IMR-90 (cell line): ENCODE measurements at regions of chr2 and their contacts with region 1.

Region 1: DNA sequence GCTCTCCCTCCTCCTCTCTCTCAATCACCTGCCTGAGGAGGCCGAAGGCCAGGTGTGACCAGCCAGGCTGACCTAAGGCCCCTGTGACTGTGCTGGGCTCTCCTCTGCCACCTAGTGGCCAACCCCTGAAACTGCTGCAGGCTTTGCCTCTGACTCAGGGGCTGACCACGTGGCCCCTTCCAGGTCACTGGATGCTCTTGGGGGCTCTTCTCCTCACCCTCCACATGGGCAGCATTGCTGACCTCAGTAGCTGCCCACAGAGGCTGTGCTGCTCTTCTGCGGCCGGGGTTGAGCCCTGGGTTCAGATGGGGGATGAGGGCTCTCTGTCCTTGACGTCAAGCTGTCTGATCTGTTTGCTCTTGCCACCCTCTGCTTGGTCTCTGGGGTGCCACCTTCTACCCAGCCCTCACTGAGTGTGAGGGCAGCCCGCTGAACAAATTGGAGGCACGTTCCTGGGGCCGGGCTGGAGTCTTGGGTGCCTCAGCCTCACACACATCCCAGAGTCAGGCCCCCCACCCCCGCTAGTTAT is 122.7 kb downstream of the TWIST2 start:
- DNase-seq: peak; percentile 63
- ATAC-seq: peak; percentile 90
- H3K4me3 ChIP-seq: no peak overlapping the region
- H3K27ac ChIP-seq: no peak overlapping the region
- H3K4me1 ChIP-seq: peaks cover 10% of the 10 kb centered on the region
- H3K27me3 ChIP-seq: no peaks in the 10 kb centered on the region; the same call in 1 of the 2 replicates
- CTCF ChIP-seq: peak; percentile 95
- POLR2A ChIP-seq: no peak
- RAD21 ChIP-seq: peak; percentile 80

Region 2: GRCh38 chr2:238720232-238720672 is 250.4 kb before region 1 on chr2:
- CTCF ChIA-PET with region 1: no interaction called
- POLR2A ChIA-PET with region 1: no interaction called
- dilution Hi-C with region 1: no loop called
- in situ Hi-C with region 1: no loop called
- intact Hi-C with region 1: loop called (anchors 10 kb)
- DNase-seq: peak; percentile 19
- ATAC-seq: peak; percentile 56; the same call in 1 of the 2 replicates
- H3K4me3 ChIP-seq: no peak overlapping the region
- H3K27ac ChIP-seq: no peak overlapping the region
- H3K4me1 ChIP-seq: no peaks in the 10 kb centered on the region
- H3K27me3 ChIP-seq: peaks cover 12% of the 10 kb centered on the region
- CTCF ChIP-seq: peak; percentile 46
- POLR2A ChIP-seq: no peak
- RAD21 ChIP-seq: peak; percentile 40